Esophagus muscularis mucosa (tissue), 4 donors: ENCODE measurements at regions of chr12 and their contacts with region 1.

Region 1: GRCh38 chr12:111396726-111397445 is 8.8 kb upstream of the SH2B3 start:
- DNase-seq: no peak
- H3K4me3 ChIP-seq: peak overlapping the region; percentile 38 to 44 (median 42)
- H3K27ac ChIP-seq: peak overlapping the region; percentile 40 to 57 (median 54)
- H3K4me1 ChIP-seq: peaks cover 12 to 19% (median 17%) of the 10 kb centered on the region in 4 donors
- H3K27me3 ChIP-seq: peaks cover 0 to 6% (median 0%) of the 10 kb centered on the region in 4 donors
- CTCF ChIP-seq: peak; percentile 96 to 100 (median 99)
- EP300 ChIP-seq: no peak
- POLR2A ChIP-seq: no peak

Region 2: DNA sequence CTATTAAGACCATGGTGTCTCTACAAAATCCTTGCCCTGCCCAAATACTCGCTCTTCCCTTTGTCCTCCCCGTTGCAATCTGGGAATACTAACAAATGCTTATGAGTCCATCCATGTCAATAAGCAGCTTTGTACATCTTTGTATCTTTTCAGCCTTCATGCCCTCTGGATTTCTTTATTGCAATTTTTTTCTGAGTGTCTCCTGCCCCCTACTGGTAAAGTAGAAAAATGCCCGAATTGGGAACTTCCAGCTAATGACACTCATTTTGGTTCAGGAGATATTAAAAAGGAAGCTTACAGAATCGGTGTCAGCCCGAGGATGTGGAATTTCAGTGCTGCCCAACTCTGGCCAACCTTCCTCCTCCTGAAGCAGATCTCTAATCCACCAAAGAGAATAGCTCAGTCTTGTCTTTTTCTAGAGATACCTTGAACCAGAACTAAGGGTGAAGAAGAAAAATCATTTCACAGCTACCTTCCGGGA is 54.8 kb after region 1 on chr12:
- intact Hi-C with region 1: loop called (anchors 2 kb)
- DNase-seq: peak; percentile 68
- H3K4me3 ChIP-seq: no peak overlapping the region
- H3K27ac ChIP-seq: no peak overlapping the region
- H3K4me1 ChIP-seq: peaks cover 35 to 57% (median 55%) of the 10 kb centered on the region in 4 donors
- H3K27me3 ChIP-seq: no peaks in the 10 kb centered on the region
- CTCF ChIP-seq: peak; percentile 71 to 77 (median 77)
- EP300 ChIP-seq: no peak
- POLR2A ChIP-seq: no peak

Region 3: DNA sequence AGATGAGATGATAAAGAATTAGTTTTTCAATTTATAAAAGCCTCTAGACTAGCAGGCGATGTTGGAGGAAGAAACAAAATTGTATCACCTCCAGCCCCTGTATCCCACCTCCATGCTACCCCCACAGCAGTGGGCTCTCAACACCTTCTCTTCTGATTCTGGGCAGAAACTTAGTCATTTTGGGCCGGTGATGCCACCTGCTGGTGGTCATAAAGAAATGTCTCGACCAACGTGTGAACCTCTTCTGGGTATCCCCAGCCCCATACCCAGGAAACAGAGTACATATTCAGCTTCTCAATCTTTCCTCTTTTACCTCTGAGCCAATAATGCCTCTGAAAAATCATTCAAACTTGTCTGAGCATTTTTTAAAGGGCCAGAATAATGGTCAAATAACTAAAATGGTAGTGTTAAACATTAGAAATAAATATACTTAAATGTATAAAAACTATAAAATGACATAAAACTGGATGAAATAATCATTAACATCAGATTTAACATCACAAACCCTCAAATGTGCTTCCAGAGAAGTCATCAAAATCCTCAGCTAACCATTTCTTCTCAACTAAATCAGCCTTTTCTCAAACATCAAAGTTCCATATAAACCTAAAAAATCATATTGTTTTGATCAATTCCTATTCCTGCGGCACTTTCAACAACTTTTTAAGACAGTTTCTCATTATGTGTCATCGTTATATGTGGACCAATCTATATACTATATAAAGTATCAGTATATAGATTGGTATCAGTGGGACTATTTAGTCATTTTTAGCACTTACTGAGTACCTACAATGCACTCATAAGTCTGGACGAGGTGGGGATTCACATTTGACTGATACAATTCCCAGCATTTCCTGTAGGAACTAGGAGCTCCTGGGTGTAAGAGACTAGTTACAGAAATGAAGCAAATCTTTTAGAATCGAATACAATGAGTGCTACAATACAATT is 132.8 kb after region 1 on chr12:
- intact Hi-C with region 1: loop called (anchors 2 kb)
- DNase-seq: no peak
- H3K4me3 ChIP-seq: no peak overlapping the region
- H3K27ac ChIP-seq: no peak overlapping the region
- H3K4me1 ChIP-seq: no peaks in the 10 kb centered on the region
- H3K27me3 ChIP-seq: no peaks in the 10 kb centered on the region
- CTCF ChIP-seq: peak; percentile 53 to 63 (median 59)
- EP300 ChIP-seq: no peak
- POLR2A ChIP-seq: no peak

Region 4: DNA sequence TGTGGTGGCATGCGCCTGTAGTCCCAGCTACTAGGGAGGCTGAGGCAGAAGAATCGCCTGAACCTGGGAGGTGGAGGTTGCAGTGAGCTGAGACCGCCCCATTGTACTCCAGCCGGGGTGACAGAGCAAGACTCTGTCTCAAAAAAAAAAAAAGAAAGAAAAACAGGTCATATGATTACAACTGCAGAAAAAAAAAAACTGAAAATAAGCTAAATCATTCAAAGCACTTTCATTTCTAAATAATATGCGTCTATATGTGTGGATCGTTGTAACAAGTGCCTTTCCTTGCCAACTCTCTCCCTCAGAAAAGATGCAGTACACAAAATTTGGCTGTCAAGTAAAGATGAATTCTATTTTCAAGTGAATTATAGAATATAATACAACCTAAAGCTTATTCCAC is 159.8 kb after region 1 on chr12:
- intact Hi-C with region 1: no loop called
- DNase-seq: no peak
- H3K4me3 ChIP-seq: no peak overlapping the region
- H3K27ac ChIP-seq: peak overlapping the region in 3 of 4 donors; percentile 16 to 42 (median 30)
- H3K4me1 ChIP-seq: peaks cover 20 to 63% (median 55%) of the 10 kb centered on the region in 4 donors
- H3K27me3 ChIP-seq: no peaks in the 10 kb centered on the region
- CTCF ChIP-seq: no peak
- EP300 ChIP-seq: no peak
- POLR2A ChIP-seq: no peak

Region 5: DNA sequence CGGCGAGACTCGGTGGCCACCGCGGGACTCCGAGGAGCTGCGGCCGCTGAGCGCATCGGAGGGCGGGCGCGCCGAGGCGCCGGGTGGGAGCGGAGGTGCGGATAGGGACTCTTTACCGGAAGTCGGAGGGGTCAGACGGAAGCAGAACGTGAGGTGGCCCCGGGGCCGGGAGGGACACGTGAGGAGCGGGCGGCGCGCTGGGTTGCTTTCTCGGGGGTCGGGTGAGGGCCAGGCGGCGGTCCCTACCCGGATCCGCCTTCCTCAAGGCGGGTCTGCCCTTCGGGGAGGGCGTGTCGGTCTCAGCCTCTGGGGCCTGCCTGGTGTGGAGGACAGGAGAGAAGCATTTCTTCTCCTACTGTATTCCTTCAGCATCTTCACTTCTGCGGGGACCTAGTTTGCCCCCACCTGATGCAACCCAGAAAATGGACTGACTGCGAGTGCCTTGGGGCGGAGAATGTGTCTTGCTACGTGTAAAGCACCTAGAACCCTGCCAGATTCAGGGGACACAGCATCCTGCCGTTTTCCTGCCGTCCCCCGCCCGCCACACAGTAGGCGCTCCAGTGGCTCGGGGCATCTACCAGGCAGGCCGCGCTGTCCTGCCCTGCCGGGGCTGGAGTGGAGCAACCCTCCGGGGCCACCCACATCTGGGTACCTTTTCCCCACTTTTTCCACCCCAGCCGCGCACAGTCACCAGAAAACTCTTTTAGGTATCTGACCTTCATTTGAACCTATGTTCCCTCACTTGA is 202.7 kb after region 1 on chr12:
- intact Hi-C with region 1: no loop called
- DNase-seq: peak; percentile 98
- H3K4me3 ChIP-seq: peak overlapping the region; percentile 91 to 99 (median 97)
- H3K27ac ChIP-seq: peak overlapping the region; percentile 96 to 98 (median 97)
- H3K4me1 ChIP-seq: peaks cover 33 to 38% (median 38%) of the 10 kb centered on the region in 4 donors
- H3K27me3 ChIP-seq: no peaks in the 10 kb centered on the region
- CTCF ChIP-seq: no peak
- EP300 ChIP-seq: no peak
- POLR2A ChIP-seq: peak; percentile 82

Region 6: DNA sequence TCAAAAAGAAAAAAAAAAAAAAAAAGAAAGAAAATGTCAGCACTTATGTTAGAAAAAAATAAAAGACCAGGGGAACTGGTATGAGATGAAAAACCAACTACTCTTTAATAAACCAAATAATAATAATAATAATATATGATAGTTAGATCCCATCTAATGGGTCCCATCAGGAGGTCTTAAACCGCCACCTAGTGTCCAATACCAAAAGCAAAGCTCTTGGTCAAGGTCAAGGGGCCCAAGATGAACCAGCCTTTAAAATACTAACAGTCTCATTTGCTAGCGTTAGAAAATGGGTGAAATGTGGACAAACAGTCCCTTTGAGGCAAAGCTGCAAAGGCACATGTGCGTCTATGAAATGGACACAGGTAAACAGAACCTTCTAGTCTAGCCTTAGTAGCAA is 276.6 kb after region 1 on chr12:
- intact Hi-C with region 1: loop called (anchors 10 kb)
- DNase-seq: no peak
- H3K4me3 ChIP-seq: no peak overlapping the region
- H3K27ac ChIP-seq: no peak overlapping the region
- H3K4me1 ChIP-seq: peaks cover 0 to 9% (median 0%) of the 10 kb centered on the region in 4 donors
- H3K27me3 ChIP-seq: no peaks in the 10 kb centered on the region
- CTCF ChIP-seq: peak; percentile 16 to 41 (median 26)
- EP300 ChIP-seq: no peak
- POLR2A ChIP-seq: no peak